Vagina (tissue), 2 donors: ENCODE measurements at regions of chr20 and their contacts with region 1.

Region 1: DNA sequence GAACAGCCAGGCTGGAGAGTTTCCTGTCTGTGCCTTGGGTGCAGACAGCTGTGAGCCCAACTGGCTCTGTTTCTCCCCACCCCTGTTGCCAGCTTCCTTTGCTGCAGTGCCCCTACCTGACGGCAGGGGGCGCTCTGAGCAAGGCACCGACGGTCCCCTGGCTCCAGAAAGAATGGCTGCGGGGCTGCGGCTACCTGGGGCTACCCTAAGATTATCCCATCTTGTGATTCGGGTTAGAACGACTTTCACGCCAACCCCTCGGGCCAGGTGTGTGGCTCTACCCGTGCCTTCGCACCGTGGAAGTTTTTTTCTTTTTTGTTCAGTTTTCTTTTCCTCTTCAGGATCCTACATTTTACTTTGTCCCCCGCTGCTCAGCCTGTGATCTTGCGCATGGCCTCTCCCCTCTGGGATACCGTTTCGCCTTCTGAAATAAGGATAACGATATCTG is 33.4 kb upstream of the AAR2 start:
- DNase-seq: no peak
- H3K4me3 ChIP-seq: no peak overlapping the region
- H3K27ac ChIP-seq: no peak overlapping the region
- H3K4me1 ChIP-seq: no peaks in the 10 kb centered on the region
- H3K27me3 ChIP-seq: no peaks in the 10 kb centered on the region
- CTCF ChIP-seq: peak; percentile 88 to 94 (median 89)
- POLR2A ChIP-seq: no peak

Region 2: DNA sequence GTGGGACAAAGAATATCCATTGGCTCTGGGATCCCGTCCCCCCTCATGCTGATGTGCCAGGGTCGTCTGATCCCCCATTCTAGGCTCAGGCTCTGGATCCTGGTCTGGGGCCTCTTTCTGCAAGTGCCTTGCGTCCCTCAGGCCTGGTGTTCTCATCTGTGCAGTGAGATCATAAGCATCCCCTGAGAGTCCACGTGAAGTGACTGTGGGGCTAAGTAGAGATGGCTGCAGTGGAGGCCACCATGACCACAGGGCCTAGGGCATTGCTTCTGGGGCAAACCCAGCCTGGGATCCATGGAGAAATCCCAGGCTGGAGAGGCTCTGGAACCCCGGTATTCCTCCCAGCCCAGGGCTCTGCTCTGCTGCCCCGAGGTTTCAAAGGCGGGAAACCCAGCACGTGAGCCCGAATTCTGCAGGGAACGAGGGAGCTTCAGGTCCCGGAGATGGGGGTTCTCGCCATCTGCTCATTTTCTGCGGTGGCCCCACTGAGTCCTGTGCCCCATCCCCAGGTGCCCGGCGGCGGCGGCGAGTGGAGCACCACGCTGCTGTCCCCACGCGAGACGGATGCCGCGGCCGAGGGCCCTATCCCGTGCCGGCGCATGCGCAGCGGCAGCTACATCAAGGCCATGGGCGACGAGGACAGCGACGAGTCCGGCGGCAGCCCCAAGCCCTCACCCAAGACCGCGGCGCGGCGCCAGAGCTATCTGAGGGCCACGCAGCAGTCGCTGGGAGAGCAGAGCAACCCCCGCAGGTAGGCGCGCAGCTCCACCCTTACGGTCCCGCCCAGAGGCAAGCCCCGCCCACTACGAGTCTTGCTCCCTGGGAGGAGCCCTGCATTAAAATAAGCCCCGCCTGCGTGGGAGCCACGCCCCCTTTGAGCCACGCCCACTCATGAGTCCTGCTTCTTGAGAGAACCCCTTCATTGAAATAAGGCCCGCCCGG is 233.0 kb after region 1 on chr20:
- intact Hi-C with region 1: loop called (anchors 2 kb)
- DNase-seq: no peak
- H3K4me3 ChIP-seq: peak overlapping the region; percentile 35 to 42
- H3K27ac ChIP-seq: no peak overlapping the region
- H3K4me1 ChIP-seq: peaks cover 10% of the 10 kb centered on the region
- H3K27me3 ChIP-seq: no peaks in the 10 kb centered on the region
- CTCF ChIP-seq: no peak
- POLR2A ChIP-seq: no peak

Region 3: DNA sequence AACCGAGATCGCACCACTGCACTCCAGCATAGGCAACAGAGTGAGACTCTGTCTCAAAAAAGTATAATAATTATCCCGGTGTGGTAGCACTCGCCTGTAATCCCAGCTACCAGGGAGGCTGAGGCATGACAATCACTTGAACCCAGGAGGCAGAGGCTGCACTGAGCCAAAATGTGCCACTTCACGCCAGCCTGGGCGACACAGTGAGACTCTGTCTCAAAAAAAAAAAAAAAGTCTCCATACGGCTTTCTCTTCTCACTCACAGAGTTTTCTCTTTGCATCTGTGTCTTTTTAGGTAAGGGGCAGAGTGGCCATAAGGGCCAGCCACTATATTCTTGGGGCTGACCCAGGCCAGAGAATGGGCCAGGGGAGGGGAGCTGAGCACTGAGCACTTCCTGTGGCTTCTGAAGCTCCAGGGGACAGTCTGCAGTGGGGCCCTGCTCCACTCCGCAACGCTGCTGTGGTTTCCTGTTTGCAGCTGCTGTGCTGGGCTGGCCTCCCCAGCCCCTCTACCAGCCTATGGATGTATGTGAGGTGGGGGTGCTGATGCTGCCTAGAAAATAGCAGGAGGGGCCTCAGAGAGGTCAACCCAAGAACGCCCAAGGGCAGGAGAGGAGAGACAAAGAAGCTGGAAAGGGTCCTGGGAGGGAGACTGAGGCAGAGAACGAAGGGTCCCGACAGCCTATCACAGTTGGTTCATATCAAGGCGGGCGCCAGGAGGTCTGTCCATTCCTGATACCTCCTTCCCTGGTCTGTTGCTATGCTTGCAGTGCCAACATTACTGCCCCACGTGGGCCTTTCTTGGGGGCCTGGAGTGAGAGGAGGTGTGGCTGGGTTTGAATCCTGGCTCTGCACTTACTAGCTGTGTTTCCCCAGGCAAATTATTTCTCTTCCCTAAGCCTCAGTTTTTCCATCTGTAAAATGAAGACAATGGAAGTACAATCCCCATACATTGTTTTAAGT is 427.1 kb after region 1 on chr20:
- intact Hi-C with region 1: no loop called
- DNase-seq: no peak
- H3K4me3 ChIP-seq: no peak overlapping the region
- H3K27ac ChIP-seq: no peak overlapping the region
- H3K4me1 ChIP-seq: no peaks in the 10 kb centered on the region
- H3K27me3 ChIP-seq: no peaks in the 10 kb centered on the region
- CTCF ChIP-seq: no peak
- POLR2A ChIP-seq: no peak